Cardiac septum (tissue), 1 donor: ENCODE measurements at regions of chr9 and their contacts with region 1.

Region 1: DNA sequence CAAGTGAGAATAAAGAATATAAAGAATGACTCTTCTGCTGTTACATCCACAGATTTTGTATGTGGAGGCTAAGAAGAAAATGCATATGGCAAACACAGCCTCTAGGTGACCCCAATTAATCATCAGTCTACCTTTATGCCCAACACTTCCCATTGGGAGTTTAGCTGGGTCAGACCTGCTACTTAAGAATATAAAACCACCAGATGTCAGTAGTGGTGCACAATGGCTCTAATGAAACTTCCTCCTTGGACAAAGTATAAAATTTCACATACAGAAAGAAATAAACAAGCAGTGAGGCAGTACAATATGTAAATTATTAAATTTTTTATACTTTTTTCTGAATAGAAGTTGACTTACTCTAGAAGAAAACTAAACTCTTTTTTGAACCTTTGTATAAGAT is 539.9 kb downstream of the BRINP1 start:
- DNase-seq: no peak

Region 2: GRCh38 chr9:119289740-119290433 is 460.6 kb after region 1 on chr9:
- intact Hi-C with region 1: loop called (anchors 2 kb)
- DNase-seq: no peak